ENCODE measurements at regions of chr3 and their contacts with region 1.

Region 1: DNA sequence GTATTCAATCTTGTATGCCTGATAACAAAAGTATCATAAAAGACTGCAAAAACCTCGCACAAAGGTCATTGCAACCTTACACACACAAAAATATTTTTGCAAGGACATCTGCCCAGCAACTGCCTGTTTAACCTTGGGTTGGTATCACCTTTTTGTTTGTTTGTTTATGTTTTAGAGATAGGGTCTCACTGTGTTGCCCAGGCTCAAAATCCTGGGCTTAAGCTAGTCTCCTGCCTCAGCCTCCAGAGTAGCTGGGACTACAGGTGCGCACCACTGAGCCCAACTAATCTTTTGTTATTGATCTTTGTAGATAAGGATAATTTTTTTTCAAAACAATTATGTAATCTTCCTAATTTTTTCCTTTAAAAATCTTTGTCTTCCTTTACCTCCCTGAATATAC is 54.2 kb downstream of the SPTSSB start:
- DNase-seq: no peak
- H3K4me3 ChIP-seq: no peak overlapping the region
- H3K27me3 ChIP-seq: no peaks in the 10 kb centered on the region
- CTCF ChIP-seq: no peak

Region 2: GRCh38 chr3:161305095-161305991 is 11.7 kb before region 1 on chr3:
- CTCF ChIA-PET with region 1: interaction called, 12 read pairs
- POLR2A ChIA-PET with region 1: no interaction called
- DNase-seq: no peak
- H3K4me3 ChIP-seq: no peak overlapping the region
- H3K27me3 ChIP-seq: no peaks in the 10 kb centered on the region
- CTCF ChIP-seq: peak; percentile 75